A549 (cell line): ENCODE measurements at regions of chr17 and their contacts with region 1.

Region 1: DNA sequence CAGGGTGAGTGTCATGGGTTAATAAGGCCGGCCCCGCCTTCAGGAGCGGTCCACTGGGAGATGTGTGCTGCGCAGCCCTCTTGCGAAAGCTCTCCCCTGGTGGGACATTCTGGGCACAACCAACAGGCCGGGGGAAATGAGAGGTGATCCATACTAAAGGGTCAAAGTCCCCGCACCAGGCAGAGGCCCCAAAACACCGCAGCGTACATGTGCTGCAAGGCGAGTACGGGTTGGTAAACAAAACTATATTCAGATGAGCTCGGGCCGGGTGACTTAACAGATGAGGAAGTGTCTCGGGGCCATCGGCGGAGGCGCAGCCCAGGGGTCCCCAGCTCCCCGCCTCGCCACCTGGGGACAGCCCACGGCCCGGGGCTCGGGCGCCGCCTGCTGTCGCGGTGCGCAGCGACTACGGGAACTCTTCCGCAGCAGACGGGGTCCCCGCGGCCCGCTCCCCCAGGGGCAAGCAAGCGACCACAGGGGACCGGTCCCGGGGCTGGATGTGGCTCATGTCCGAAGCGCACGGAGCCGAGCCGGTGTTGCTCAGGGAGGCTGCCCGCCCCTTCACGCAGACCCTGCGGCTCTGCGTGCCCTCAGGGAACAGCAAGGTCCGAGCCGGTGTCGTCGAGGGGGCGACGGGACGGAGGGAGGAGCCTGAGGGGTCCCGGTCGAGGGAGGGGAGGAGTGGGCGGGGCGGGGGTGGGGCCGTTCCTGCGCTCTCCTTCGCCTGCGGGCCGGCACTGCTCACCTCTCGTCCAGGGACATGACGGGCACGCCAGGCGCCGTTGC is at the start of gene RAB37:
- DNase-seq: peak; percentile 87 to 90
- ATAC-seq: peak; percentile 70 to 76
- H3K4me3 ChIP-seq: peak within 1 kb of the TSS; percentile 40
- H3K27ac ChIP-seq: peak within 1 kb of the TSS; percentile 54 to 83
- H3K4me1 ChIP-seq: peaks cover 36% of the 10 kb centered on the region
- CTCF ChIP-seq: peak; percentile 63
- EP300 ChIP-seq: no peak
- POLR2A ChIP-seq: no peak
- RAD21 ChIP-seq: peak in 1 of 2 experiments; percentile 68; a peak in 4 of 5 replicates
- polyA plus RNA-seq, gene RAB37: 15.8 and 18.7 TPM in 2 replicates

Region 2: GRCh38 chr17:74601944-74602572 is 134.6 kb before region 1 on chr17:
- CTCF ChIA-PET with region 1: interaction called, 20 read pairs
- POLR2A ChIA-PET with region 1: no interaction called
- DNase-seq: peak; percentile 70 to 79
- ATAC-seq: peak; percentile 65 to 85; a peak in 4 of 6 replicates
- H3K4me3 ChIP-seq: no peak overlapping the region
- H3K27ac ChIP-seq: peak overlapping the region in 1 of 2 experiments; percentile 44; a peak in 2 of 6 replicates
- H3K4me1 ChIP-seq: peaks cover 12% of the 10 kb centered on the region
- CTCF ChIP-seq: peak; percentile 96
- EP300 ChIP-seq: no peak
- POLR2A ChIP-seq: no peak
- RAD21 ChIP-seq: peak; percentile 91 to 93

Region 3: DNA sequence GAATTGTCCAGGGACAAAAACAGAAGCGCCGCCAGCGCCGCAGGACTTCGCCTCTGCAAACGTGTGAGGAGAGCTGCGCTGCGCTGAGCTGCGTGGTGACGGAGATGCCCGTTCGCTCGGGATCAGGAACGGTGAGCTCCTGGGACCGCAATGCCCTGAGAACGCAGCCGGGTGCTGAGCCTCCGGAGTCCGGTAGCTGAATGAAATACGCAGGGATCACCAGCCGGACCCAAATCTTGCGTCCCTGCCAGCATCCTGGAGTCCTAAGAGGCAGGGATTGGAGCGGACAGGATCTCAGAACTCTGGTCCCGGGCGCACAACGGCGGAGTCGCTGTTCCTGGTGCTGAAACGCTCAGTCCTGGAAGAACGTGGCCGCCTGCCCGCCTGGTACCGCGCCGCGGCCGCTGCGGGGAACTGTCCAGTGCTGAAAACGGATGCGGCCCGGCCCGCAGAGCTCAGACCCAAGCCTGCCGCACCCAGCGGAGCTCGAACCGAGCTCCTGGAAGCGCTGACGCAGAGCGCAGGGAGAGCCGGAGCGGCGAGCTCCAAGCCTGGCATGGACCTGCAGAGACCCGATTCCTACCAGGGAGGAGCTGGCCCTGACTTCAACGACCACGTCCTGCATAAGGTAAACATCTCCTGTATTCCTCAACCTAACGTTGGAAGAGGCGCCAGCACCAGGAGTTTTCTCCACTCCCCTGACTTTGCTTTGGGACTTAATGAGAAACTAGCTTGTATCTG is 65.5 kb before region 1 on chr17:
- CTCF ChIA-PET with region 1: interaction called, 20 read pairs
- POLR2A ChIA-PET with region 1: no interaction called
- DNase-seq: peak; percentile 71 to 80
- ATAC-seq: peak; percentile 88 to 98
- H3K4me3 ChIP-seq: no peak overlapping the region
- H3K27ac ChIP-seq: no peak overlapping the region
- H3K4me1 ChIP-seq: no peaks in the 10 kb centered on the region
- CTCF ChIP-seq: no peak
- EP300 ChIP-seq: no peak
- POLR2A ChIP-seq: no peak
- RAD21 ChIP-seq: no peak

Region 4: GRCh38 chr17:74715144-74715543 is 21.6 kb before region 1 on chr17:
- CTCF ChIA-PET with region 1: interaction called, 11 read pairs
- POLR2A ChIA-PET with region 1: no interaction called
- DNase-seq: no peak
- ATAC-seq: no peak; a peak in 1 of 6 replicates
- H3K4me3 ChIP-seq: no peak overlapping the region
- H3K27ac ChIP-seq: no peak overlapping the region
- H3K4me1 ChIP-seq: no peaks in the 10 kb centered on the region
- CTCF ChIP-seq: no peak
- EP300 ChIP-seq: no peak
- POLR2A ChIP-seq: no peak
- RAD21 ChIP-seq: no peak

Region 5: DNA sequence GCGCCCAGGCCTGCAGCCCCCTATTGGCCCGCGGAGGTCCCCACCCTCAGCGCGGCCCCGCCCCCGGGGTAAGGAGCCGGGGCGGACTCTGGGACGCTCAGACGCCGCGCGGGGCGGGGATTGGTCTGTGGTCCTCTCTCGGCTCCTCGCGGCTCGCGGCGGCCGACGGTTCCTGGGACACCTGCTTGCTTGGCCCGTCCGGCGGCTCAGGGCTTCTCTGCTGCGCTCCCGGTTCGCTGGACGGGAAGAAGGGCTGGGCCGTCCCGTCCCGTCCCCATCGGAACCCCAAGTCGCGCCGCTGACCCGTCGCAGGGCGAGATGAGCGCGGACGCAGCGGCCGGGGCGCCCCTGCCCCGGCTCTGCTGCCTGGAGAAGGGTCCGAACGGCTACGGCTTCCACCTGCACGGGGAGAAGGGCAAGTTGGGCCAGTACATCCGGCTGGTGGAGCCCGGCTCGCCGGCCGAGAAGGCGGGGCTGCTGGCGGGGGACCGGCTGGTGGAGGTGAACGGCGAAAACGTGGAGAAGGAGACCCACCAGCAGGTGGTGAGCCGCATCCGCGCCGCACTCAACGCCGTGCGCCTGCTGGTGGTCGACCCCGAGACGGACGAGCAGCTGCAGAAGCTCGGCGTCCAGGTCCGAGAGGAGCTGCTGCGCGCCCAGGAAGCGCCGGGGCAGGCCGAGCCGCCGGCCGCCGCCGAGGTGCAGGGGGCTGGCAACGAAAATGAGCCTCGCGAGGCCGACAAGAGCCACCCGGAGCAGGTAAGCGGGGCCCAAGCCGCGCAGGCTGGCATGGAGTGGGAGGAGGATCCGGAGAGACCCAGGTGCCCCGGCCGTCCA is 12.0 kb after region 1 on chr17 and contains the start of gene NHERF1:
- CTCF ChIA-PET with region 1: interaction called, 65 read pairs
- POLR2A ChIA-PET with region 1: interaction called, 5 read pairs
- DNase-seq: peak; percentile 59 to 90
- ATAC-seq: peak; percentile 86 to 96
- H3K4me3 ChIP-seq: peak within 1 kb of the TSS; percentile 76
- H3K27ac ChIP-seq: peak within 1 kb of the TSS; percentile 71 to 88
- H3K4me1 ChIP-seq: peaks cover 30% of the 10 kb centered on the region
- CTCF ChIP-seq: no peak; the same call in 2 of the 3 replicates
- EP300 ChIP-seq: no peak
- POLR2A ChIP-seq: peak; percentile 99
- RAD21 ChIP-seq: peak in 1 of 2 experiments; percentile 36; a peak in 1 of 5 replicates
- polyA plus RNA-seq, gene NHERF1: 50.2 and 51.5 TPM in 2 replicates

Region 6: GRCh38 chr17:74776044-74776977 is 39.6 kb after region 1 on chr17 and contains the start of gene NAT9:
- CTCF ChIA-PET with region 1: interaction called, 107 read pairs
- POLR2A ChIA-PET with region 1: no interaction called
- DNase-seq: peak; percentile 97 to 99
- ATAC-seq: peak; percentile 84 to 92
- H3K4me3 ChIP-seq: peak within 1 kb of the TSS; percentile 69
- H3K27ac ChIP-seq: peak within 1 kb of the TSS; percentile 89 to 92
- H3K4me1 ChIP-seq: peaks cover 31% of the 10 kb centered on the region
- CTCF ChIP-seq: no peak
- EP300 ChIP-seq: no peak
- POLR2A ChIP-seq: peak; percentile 91
- RAD21 ChIP-seq: no peak
- polyA plus RNA-seq, gene NAT9: 42.9 and 43.4 TPM in 2 replicates

Region 7: DNA sequence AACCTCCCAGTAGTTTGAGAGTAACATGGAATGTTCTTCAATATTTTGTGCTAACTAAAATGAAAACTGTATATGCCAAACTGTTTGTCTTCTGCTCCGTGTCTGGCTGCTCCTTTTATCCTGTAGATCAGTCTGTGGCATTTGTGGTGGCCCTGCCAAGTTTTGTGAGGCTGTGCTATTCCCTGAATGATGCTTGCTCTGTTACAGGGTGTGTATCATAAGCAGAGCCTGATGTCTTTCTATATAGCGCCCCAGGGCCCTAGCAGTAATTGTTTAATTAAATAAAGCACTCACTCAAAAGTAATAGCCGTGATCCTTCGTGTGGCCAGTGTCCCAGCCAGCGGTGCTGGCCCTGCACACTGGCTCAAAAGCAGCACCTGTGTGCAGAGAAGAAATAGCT is 67.3 kb after region 1 on chr17:
- CTCF ChIA-PET with region 1: no interaction called
- POLR2A ChIA-PET with region 1: no interaction called
- DNase-seq: no peak
- ATAC-seq: no peak
- H3K4me3 ChIP-seq: no peak overlapping the region
- H3K27ac ChIP-seq: no peak overlapping the region
- H3K4me1 ChIP-seq: no peaks in the 10 kb centered on the region
- CTCF ChIP-seq: no peak
- EP300 ChIP-seq: no peak
- POLR2A ChIP-seq: no peak
- RAD21 ChIP-seq: no peak

Region 8: DNA sequence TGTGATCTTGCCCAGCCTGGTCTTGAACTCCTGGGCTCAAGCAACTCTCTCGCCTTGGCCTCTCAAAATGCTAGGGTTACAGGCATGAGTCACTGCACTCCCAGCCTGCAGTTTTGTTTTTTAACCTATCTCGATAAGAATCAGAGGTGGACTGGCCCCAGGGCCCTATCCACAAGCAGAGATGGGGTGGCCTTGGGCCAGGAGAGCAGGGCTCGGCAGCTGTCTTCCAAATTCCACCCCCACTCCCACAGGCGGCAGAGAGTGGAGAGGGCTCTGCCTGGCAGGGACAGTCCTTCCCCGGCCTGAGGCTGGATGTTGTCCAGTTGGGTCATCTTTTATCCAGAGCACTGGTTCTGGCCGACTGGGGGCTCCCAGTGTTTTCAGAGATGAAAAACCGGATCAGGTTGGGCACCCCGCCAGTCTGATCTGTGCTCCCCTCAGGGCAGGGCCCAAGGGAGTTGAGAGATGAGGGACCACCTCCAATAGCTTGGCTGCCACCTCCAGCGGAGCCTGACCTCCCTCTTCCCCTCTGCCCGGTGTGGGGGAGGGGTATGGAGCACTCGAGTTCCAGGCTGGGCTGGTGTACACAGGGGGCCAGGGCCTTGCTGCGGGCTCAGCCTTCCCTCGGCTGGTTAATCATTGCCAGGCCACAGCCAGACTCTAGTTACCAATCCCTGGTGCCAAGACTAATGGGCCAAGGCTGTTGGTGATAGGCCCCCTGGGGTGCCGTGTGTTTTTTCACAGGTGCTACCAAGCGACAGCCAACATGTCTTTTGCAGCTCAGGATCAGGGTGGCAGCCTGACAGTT is 820.6 kb after region 1 on chr17:
- CTCF ChIA-PET with region 1: no interaction called
- POLR2A ChIA-PET with region 1: no interaction called
- DNase-seq: peak; percentile 94 to 97
- ATAC-seq: peak; percentile 79 to 86
- H3K4me3 ChIP-seq: peak overlapping the region; percentile 10; the same call in 1 of the 3 replicates
- H3K27ac ChIP-seq: peak overlapping the region; percentile 93 to 95
- H3K4me1 ChIP-seq: peaks cover 81% of the 10 kb centered on the region
- CTCF ChIP-seq: 0 out of 3 replicates have a peak, but pooled peaks have one; percentile 8
- EP300 ChIP-seq: peak in 1 of 2 experiments; percentile 58; a peak in 2 of 5 replicates
- POLR2A ChIP-seq: no peak
- RAD21 ChIP-seq: peak; percentile 12 to 39; a peak in 4 of 5 replicates